Heart right ventricle (tissue), 16 donors: ENCODE measurements at regions of chr5 and their contacts with region 1.

Region 1: DNA sequence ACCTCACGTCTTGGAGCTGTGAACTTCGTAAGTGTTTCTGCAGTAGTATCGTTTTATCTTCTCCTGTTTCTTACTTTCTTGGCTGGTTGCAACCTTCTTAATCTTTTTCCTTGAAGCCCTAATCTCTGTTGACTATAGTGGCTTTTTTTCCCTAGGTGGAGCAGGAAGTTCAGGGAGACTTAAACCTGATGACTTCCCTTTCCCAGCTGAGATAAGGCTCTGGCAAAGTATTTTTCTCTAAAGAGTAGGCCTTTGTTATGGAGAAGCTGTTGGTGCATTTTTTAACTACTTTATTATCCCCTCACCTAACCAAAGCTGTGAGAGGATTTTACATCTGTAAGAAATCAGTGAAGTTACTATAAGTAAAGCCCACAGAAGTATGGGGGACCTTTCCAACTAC is 723.1 kb upstream of the RIOK2 start:
- DNase-seq: no peak
- ATAC-seq: peak in 3 of 8 donors; percentile 25 to 56 (median 55)
- H3K4me3 ChIP-seq: no peak overlapping the region
- H3K27ac ChIP-seq: peak overlapping the region in 1 of 10 donors; percentile 18
- H3K4me1 ChIP-seq: peaks cover 0 to 9% (median 0%) of the 10 kb centered on the region in 9 donors
- H3K27me3 ChIP-seq: no peaks in the 10 kb centered on the region
- CTCF ChIP-seq: no peak

Region 2: DNA sequence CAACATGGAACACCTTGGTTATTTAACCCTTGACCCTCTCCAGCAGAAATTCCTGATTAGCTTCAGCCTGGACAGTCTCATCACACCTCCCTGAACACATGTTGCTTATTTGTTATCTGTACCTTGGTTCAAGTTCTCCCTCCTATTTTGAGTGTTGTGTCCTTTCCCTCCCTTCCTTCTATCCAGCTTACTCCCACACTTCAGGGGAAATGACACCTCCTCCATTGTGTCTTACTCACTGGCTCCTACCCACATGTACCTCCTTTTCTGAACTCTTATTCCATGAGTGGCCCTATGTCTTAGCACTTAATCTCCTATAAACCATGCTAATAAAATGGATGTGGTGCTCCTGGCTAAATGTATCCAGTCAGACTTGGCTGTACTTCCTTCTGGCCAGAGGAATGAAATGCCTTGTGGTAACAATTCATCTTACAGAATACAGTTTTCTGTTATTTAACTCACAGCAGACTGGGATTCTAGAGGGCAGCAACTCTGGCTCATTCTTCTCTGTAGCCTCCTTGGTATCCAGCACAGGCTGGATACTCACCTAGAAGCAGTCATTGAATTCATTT is 774.9 kb before region 1 on chr5:
- intact Hi-C with region 1: no loop called
- DNase-seq: no peak
- ATAC-seq: no peak
- H3K4me3 ChIP-seq: no peak overlapping the region
- H3K27ac ChIP-seq: no peak overlapping the region
- H3K4me1 ChIP-seq: peaks cover 0 to 25% (median 8%) of the 10 kb centered on the region in 9 donors
- H3K27me3 ChIP-seq: no peaks in the 10 kb centered on the region
- CTCF ChIP-seq: no peak

Region 3: GRCh38 chr5:97838214-97838613 is 67.9 kb before region 1 on chr5:
- intact Hi-C with region 1: loop called in 1 of 10 experiments (anchors 5 kb)
- DNase-seq: no peak
- ATAC-seq: peak; percentile 50 to 95 (median 91)
- H3K4me3 ChIP-seq: no peak overlapping the region
- H3K27ac ChIP-seq: peak overlapping the region in 2 of 10 donors; percentile 24 to 48
- H3K4me1 ChIP-seq: peaks cover 0 to 44% (median 22%) of the 10 kb centered on the region in 9 donors
- H3K27me3 ChIP-seq: no peaks in the 10 kb centered on the region
- CTCF ChIP-seq: no peak

Region 4: GRCh38 chr5:97923496-97923895 is 17.4 kb after region 1 on chr5:
- intact Hi-C with region 1: no loop called
- DNase-seq: no peak
- ATAC-seq: no peak
- H3K4me3 ChIP-seq: no peak overlapping the region
- H3K27ac ChIP-seq: no peak overlapping the region
- H3K4me1 ChIP-seq: no peaks in the 10 kb centered on the region
- H3K27me3 ChIP-seq: no peaks in the 10 kb centered on the region
- CTCF ChIP-seq: no peak

Region 5: DNA sequence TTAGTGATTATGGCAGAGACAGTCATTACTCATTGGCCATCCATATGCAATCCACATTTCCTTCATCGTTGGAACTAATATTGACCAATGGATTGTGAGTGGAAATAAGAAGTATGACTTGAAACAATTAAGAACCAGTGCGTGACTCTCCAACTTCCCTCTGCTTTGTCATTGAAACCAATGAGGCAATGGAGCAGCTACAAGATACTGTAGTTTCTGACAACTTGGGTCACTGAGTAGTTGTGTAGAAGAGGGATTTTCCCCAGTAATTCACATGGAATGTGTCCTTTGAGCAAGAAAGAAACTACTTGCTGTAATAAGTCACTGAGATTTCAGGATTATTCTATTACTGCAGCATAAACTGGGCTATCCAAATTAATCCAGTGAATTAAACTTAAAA is 62.2 kb after region 1 on chr5:
- intact Hi-C with region 1: no loop called
- DNase-seq: no peak
- ATAC-seq: no peak
- H3K4me3 ChIP-seq: no peak overlapping the region
- H3K27ac ChIP-seq: no peak overlapping the region
- H3K4me1 ChIP-seq: no peaks in the 10 kb centered on the region
- H3K27me3 ChIP-seq: no peaks in the 10 kb centered on the region
- CTCF ChIP-seq: no peak

Region 6: GRCh38 chr5:98570661-98571191 is 664.6 kb after region 1 on chr5:
- intact Hi-C with region 1: no loop called
- DNase-seq: no peak
- ATAC-seq: no peak
- H3K4me3 ChIP-seq: no peak overlapping the region
- H3K27ac ChIP-seq: no peak overlapping the region
- H3K4me1 ChIP-seq: no peaks in the 10 kb centered on the region
- H3K27me3 ChIP-seq: no peaks in the 10 kb centered on the region
- CTCF ChIP-seq: no peak